GM10248 (cell line): ENCODE measurements at regions of chr1 and their contacts with region 1.

Region 1: DNA sequence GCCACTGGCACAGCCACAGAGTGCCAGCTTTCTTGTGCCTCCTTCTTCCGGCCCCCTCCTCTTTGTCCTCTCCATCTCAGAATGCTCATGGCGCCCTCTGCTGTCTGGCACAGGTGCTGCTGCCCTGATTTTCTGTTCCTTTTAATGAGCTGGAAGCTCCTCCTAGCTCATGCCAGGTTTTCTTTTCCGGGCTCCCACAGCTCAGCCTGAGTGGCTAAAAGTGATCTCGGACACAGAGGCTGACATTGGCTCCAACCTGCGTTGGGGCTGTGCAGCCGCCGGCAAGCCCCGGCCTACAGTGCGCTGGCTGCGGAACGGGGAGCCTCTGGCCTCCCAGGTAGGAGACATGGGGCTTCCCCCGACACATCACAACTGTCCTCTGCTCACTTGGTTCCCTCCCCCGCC is 18.7 kb downstream of the CNTN2 start:
- DNase-seq: peak; percentile 81
- CTCF ChIP-seq: peak; percentile 96

Region 2: GRCh38 chr1:204706838-204707509 is 354.7 kb before region 1 on chr1:
- CTCF ChIA-PET with region 1: no interaction called
- POLR2A ChIA-PET with region 1: no interaction called
- DNase-seq: no peak
- CTCF ChIP-seq: no peak

Region 3: GRCh38 chr1:204858363-204858821 is 203.3 kb before region 1 on chr1:
- CTCF ChIA-PET with region 1: no interaction called
- POLR2A ChIA-PET with region 1: no interaction called
- DNase-seq: no peak
- CTCF ChIP-seq: no peak

Region 4: DNA sequence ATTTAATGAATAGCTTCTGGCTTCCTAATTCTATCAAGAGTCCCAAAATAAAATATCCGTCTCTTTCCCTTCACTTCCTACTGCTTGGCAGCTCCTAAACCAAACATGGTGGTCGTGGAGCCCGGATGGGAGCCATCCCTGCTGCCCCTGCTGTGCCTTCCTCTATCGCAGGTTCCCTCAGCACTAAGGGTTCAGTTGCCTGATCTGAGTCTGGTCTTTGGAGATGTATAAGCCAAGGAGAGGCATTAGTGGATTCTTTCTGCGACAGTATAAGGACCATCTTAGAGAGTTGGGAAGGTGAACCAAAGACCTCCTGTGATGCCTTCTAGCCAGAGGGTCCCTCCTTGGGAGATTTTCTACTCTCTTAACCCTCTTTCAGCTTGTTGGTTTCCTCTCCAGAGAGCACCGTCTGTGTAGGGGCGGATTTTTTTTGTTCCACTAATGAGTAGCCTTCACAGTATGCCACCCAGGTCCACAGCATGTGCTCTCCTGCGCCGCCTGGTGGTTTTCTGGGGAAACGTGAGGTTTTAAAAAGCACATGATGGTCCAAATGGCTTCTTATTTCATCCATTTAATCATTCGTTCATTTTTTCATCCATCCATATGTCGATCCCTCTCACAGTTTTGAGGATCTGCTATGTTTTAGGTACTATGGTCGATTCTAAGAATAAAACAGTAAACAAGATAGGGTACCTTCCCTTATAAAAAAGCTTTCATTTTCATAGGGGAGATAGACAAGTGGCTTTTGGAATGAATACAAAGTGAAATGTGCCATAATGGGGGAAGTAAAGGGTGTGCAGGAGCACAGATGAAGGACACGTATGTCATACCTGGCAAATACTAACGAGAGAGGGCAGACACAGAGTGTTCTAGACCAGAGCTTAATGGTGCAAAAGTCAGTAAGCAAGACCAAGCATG is 120.0 kb before region 1 on chr1:
- CTCF ChIA-PET with region 1: interaction called, 13 read pairs
- POLR2A ChIA-PET with region 1: no interaction called
- DNase-seq: peak; percentile 59
- CTCF ChIP-seq: peak; percentile 88

Region 5: DNA sequence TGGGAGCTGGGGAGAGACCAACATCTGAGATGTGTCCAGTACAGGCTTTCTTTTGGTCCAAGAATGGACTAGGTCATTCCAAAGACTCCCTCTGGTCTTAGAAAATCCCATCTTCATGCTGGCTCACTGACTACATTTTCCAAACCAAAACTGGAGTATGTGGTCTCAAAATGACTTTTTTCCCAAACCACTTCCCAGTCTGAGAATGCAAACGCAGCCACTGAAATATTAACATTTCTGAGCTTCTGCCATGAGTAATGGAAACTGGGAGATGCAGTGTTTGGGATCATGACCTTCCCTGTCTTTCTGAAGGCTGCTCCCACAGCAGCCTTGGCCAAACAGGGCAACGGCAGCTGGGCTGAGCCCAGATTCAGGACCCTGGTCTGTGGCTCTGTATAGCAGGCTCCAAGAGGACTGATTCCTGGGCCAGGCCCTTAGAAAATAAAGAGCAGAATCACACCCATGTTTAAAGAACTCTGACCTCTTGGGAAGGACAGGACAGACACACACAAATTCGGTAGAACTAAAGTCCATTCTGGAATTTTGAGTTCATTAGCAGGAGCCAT is 80.7 kb before region 1 on chr1:
- CTCF ChIA-PET with region 1: interaction called, 150 read pairs
- POLR2A ChIA-PET with region 1: no interaction called
- DNase-seq: no peak
- CTCF ChIP-seq: no peak

Region 6: GRCh38 chr1:205013683-205014367 is 47.8 kb before region 1 on chr1:
- CTCF ChIA-PET with region 1: interaction called, 17 read pairs
- POLR2A ChIA-PET with region 1: no interaction called
- DNase-seq: no peak
- CTCF ChIP-seq: no peak

Region 7: GRCh38 chr1:205041998-205042910 is 19.4 kb before region 1 on chr1:
- CTCF ChIA-PET with region 1: interaction called, 62 read pairs
- POLR2A ChIA-PET with region 1: no interaction called
- DNase-seq: no peak
- CTCF ChIP-seq: no peak

Region 8: GRCh38 chr1:205082431-205082830 is 20.8 kb after region 1 on chr1:
- CTCF ChIA-PET with region 1: interaction called, 78 read pairs
- POLR2A ChIA-PET with region 1: no interaction called
- DNase-seq: no peak
- CTCF ChIP-seq: no peak

Region 9: DNA sequence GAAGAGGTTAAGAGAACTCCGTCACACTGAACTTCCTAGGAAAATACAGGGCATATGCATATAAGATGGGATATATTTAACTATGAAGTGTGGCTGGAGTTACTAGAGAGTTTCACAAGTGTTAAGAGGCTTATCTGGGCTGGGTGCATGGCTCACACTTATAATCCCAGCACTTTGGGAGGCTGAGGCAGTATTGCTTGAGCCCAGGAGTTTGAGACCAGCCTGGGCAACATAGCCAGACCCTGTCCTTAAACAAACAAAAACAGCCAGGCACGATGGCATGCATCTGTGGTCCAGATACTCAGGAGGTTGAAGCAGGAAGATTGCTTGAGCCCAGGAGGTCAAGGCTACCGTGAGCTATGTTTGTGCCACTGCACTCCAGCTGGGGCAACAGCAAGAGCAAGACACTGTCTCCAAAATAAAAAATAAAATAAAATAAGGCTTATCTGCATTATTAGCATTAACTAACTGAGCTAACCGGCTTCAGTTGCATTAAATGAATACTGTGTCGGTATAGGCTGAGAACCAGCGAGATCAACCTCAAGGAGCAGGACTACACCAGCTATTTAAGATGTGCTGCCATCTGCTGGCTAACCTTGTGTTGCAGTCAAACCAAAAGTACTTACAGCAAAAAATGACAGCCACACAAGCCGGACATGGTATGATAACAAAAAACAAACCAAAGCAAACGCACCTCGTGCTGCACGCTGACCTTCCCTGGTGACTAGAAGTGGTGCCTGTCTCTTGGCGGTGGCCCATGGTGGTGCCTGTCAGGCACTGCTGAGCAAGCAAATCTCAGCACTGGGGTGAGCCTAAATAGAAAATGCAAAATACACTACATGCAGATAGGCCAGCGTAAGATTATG is 79.8 kb after region 1 on chr1:
- CTCF ChIA-PET with region 1: interaction called, 11 read pairs
- POLR2A ChIA-PET with region 1: no interaction called
- DNase-seq: peak; percentile 75
- CTCF ChIP-seq: peak; percentile 68

Region 10: GRCh38 chr1:205172729-205173366 is 111.2 kb after region 1 on chr1:
- CTCF ChIA-PET with region 1: no interaction called
- POLR2A ChIA-PET with region 1: no interaction called
- DNase-seq: no peak
- CTCF ChIP-seq: no peak

Region 11: DNA sequence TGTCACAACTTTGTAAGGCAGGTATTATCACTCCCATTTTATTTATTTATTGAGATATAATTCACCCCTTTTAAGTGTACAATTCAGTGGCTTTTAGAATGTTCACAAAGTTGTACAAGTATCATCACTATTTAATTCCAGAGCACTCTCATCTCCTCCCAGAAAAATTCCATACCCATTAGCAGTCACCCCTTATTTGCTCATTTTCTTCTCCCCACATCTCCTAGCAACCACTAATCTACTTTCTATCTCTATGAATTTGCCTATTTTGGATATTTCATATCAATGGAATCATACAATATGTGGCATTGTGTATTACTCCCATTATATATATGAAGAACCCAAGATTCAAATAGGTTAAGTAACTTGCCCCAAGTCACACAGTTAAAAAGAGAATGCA is 142.9 kb after region 1 on chr1:
- CTCF ChIA-PET with region 1: no interaction called
- POLR2A ChIA-PET with region 1: no interaction called
- DNase-seq: no peak
- CTCF ChIP-seq: no peak